Activated B cell treated with CpG ODN at 0.5 μM for 24 hours (primary cell): ENCODE measurements at regions of chr13 and their contacts with region 1.

Region 1: DNA sequence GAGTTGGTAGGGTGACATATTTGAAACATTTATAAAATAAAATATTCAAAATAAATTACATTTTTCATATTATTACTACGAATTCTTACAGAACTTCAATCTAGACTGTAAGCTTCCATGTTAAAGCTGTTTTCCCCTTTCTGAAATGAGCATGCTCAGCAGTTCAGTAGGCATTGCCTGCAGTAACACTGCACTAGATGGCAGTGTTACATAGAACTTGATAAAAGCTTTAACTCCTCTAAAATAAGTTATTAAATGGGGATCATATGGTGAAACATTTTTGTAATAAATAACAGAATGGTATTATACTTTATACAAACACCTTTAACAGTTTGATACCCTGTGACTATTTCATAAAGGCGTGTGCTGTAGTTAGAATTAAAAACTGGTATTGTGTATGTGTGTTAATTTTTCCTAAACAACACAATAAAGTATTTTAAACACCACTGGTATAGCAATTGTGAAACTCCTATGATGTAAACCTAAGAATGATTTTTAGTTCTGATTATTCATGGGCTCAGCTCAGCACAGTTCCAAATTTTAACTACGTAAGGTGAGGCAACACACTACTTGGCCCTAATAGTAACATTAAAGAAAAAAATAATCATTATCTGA is 11.6 kb upstream of the GPR18 start:
- DNase-seq: no peak
- ATAC-seq: peak; percentile 70
- H3K4me3 Mint-ChIP-seq: no peak overlapping the region
- H3K27ac Mint-ChIP-seq: peak overlapping the region; percentile 74
- H3K4me1 Mint-ChIP-seq: peaks cover 65% of the 10 kb centered on the region
- H3K27me3 Mint-ChIP-seq: no peaks in the 10 kb centered on the region
- CTCF ChIP-seq: peak; percentile 48

Region 2: GRCh38 chr13:98869408-98870090 is 400.2 kb before region 1 on chr13:
- CTCF ChIA-PET with region 1: interaction called, 5 read pairs
- POLR2A ChIA-PET with region 1: no interaction called
- intact Hi-C with region 1: loop called (anchors 5 kb)
- DNase-seq: no peak
- ATAC-seq: no peak
- H3K4me3 Mint-ChIP-seq: no peak overlapping the region
- H3K27ac Mint-ChIP-seq: no peak overlapping the region
- H3K4me1 Mint-ChIP-seq: no peaks in the 10 kb centered on the region
- H3K27me3 Mint-ChIP-seq: no peaks in the 10 kb centered on the region
- CTCF ChIP-seq: no peak

Region 3: GRCh38 chr13:99258210-99258860 is 11.4 kb before region 1 on chr13 and contains the start of gene GPR18:
- CTCF ChIA-PET with region 1: interaction called, 18 read pairs
- POLR2A ChIA-PET with region 1: interaction called, 9 read pairs
- intact Hi-C with region 1: no loop called
- DNase-seq: no peak
- ATAC-seq: peak; percentile 65
- H3K4me3 Mint-ChIP-seq: peak within 1 kb of the TSS; percentile 94
- H3K27ac Mint-ChIP-seq: peak within 1 kb of the TSS; percentile 96
- H3K4me1 Mint-ChIP-seq: peaks cover 86% of the 10 kb centered on the region
- H3K27me3 Mint-ChIP-seq: no peaks in the 10 kb centered on the region
- CTCF ChIP-seq: no peak
- total RNA-seq, gene GPR18: 29.0 and 32.4 TPM in 2 replicates

Region 4: DNA sequence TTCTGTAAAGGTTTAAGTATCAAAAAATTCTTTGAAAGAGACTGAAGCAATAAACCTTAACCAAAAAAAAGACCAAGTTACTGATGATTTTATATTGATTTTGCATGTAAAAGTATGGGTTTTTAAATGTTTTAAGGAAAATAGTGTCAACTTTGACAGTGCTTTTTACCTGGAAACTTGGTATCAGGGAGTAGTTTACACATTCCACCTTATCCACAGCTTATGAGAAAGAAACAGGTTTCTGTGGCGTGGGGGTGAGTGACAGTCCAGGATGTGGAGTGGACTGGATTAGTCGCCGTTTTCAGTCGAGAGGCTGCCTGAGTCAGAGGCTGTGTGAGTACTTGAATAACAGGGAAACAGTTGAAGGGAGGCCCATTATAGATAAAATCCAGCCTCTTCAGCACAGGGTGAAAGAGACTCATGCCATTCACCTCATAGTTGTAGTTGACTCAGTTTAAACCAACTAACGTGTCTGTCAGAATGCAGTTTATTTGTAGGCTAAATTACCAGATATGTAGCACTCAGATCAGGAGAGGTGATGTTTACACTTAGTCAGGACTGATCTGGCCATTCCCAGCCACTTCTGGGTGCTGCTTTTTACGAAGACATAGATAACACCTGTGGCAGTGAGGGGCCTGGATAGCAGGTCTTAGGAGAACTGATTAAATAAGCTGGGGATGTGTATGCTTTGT is 38.1 kb after region 1 on chr13:
- CTCF ChIA-PET with region 1: interaction called, 43 read pairs
- POLR2A ChIA-PET with region 1: interaction called, 22 read pairs
- intact Hi-C with region 1: loop called (anchors 1 kb)
- DNase-seq: no peak
- ATAC-seq: peak; percentile 57
- H3K4me3 Mint-ChIP-seq: peak overlapping the region; percentile 95
- H3K27ac Mint-ChIP-seq: peak overlapping the region; percentile 92
- H3K4me1 Mint-ChIP-seq: peaks cover 82% of the 10 kb centered on the region
- H3K27me3 Mint-ChIP-seq: no peaks in the 10 kb centered on the region
- CTCF ChIP-seq: no peak

Region 5: GRCh38 chr13:99366075-99366987 is 96.6 kb after region 1 on chr13:
- CTCF ChIA-PET with region 1: interaction called, 11 read pairs
- POLR2A ChIA-PET with region 1: interaction called, 3 read pairs
- intact Hi-C with region 1: no loop called
- DNase-seq: no peak
- ATAC-seq: peak; percentile 90
- H3K4me3 Mint-ChIP-seq: peak overlapping the region; percentile 71
- H3K27ac Mint-ChIP-seq: peak overlapping the region; percentile 89
- H3K4me1 Mint-ChIP-seq: peaks cover 85% of the 10 kb centered on the region
- H3K27me3 Mint-ChIP-seq: no peaks in the 10 kb centered on the region
- CTCF ChIP-seq: no peak

Region 6: GRCh38 chr13:99436686-99437416 is 167.1 kb after region 1 on chr13:
- CTCF ChIA-PET with region 1: interaction called, 342 read pairs
- POLR2A ChIA-PET with region 1: interaction called, 45 read pairs
- intact Hi-C with region 1: loop called (anchors 1 kb)
- DNase-seq: peak; percentile 87
- ATAC-seq: peak; percentile 59
- H3K4me3 Mint-ChIP-seq: peak overlapping the region; percentile 66
- H3K27ac Mint-ChIP-seq: peak overlapping the region; percentile 76
- H3K4me1 Mint-ChIP-seq: peaks cover 66% of the 10 kb centered on the region
- H3K27me3 Mint-ChIP-seq: peaks cover 2% of the 10 kb centered on the region
- CTCF ChIP-seq: peak; percentile 99

Region 7: GRCh38 chr13:100235311-100235901 is 965.7 kb after region 1 on chr13:
- CTCF ChIA-PET with region 1: no interaction called
- POLR2A ChIA-PET with region 1: interaction called, 6 read pairs
- intact Hi-C with region 1: loop called (anchors 2 kb)
- DNase-seq: no peak
- ATAC-seq: peak; percentile 45
- H3K4me3 Mint-ChIP-seq: peak overlapping the region; percentile 3
- H3K27ac Mint-ChIP-seq: no peak overlapping the region
- H3K4me1 Mint-ChIP-seq: peaks cover 7% of the 10 kb centered on the region
- H3K27me3 Mint-ChIP-seq: no peaks in the 10 kb centered on the region
- CTCF ChIP-seq: no peak